ENCODE measurements at regions of chr2 and their contacts with region 1.

Region 1: GRCh38 chr2:238513346-238513745 is 86.6 kb downstream of the ASB1 start:
- DNase-seq: peak; percentile 46 to 64
- ATAC-seq: peak; percentile 52 to 84; a peak in 3 of 6 replicates
- H3K4me3 ChIP-seq: no peak overlapping the region
- H3K27ac ChIP-seq: no peak overlapping the region
- H3K4me1 ChIP-seq: peaks cover 16% of the 10 kb centered on the region
- CTCF ChIP-seq: peak; percentile 55
- EP300 ChIP-seq: no peak
- POLR2A ChIP-seq: no peak
- RAD21 ChIP-seq: peak; percentile 67 to 68

Region 2: GRCh38 chr2:238523158-238524110 is 10.1 kb after region 1 on chr2:
- CTCF ChIA-PET with region 1: interaction called, 22 read pairs
- POLR2A ChIA-PET with region 1: no interaction called
- DNase-seq: no peak
- ATAC-seq: peak; percentile 60 to 75; a peak in 4 of 6 replicates
- H3K4me3 ChIP-seq: no peak overlapping the region
- H3K27ac ChIP-seq: peak overlapping the region in 1 of 2 experiments; percentile 55; a peak in 3 of 6 replicates
- H3K4me1 ChIP-seq: peaks cover 21% of the 10 kb centered on the region
- CTCF ChIP-seq: no peak
- EP300 ChIP-seq: no peak
- POLR2A ChIP-seq: no peak
- RAD21 ChIP-seq: peak in 1 of 2 experiments; percentile 26; a peak in 2 of 5 replicates

Region 3: GRCh38 chr2:238528953-238529781 is 15.8 kb after region 1 on chr2:
- CTCF ChIA-PET with region 1: interaction called, 22 read pairs
- POLR2A ChIA-PET with region 1: no interaction called
- DNase-seq: peak; percentile 66 to 88
- ATAC-seq: peak; percentile 87 to 92
- H3K4me3 ChIP-seq: no peak overlapping the region
- H3K27ac ChIP-seq: peak overlapping the region; percentile 72 to 89
- H3K4me1 ChIP-seq: peaks cover 39% of the 10 kb centered on the region
- CTCF ChIP-seq: no peak
- EP300 ChIP-seq: peak in 1 of 2 experiments; percentile 26; a peak in 1 of 5 replicates
- POLR2A ChIP-seq: no peak
- RAD21 ChIP-seq: peak; percentile 44 to 62; a peak in 4 of 5 replicates

Measured in A549 (cell line).